ENCODE measurements at regions of chr7 and their contacts with region 1.

Region 1: GRCh38 chr7:143901668-143902331 is at the start of gene TCAF1:
- DNase-seq: peak; percentile 93
- ATAC-seq: peak; percentile 95
- H3K4me3 ChIP-seq: peak within 1 kb of the TSS; percentile 91
- H3K27ac ChIP-seq: peak within 1 kb of the TSS; percentile 96
- H3K4me1 ChIP-seq: peaks cover 15% of the 10 kb centered on the region
- H3K27me3 ChIP-seq: no peaks in the 10 kb centered on the region
- CTCF ChIP-seq: peak; percentile 47
- POLR2A ChIP-seq: peak; percentile 71
- RAD21 ChIP-seq: peak; percentile 41; the same call in 1 of the 2 replicates
- total RNA-seq, gene TCAF1: 86.4 and 91.8 TPM in 2 replicates

Region 2: DNA sequence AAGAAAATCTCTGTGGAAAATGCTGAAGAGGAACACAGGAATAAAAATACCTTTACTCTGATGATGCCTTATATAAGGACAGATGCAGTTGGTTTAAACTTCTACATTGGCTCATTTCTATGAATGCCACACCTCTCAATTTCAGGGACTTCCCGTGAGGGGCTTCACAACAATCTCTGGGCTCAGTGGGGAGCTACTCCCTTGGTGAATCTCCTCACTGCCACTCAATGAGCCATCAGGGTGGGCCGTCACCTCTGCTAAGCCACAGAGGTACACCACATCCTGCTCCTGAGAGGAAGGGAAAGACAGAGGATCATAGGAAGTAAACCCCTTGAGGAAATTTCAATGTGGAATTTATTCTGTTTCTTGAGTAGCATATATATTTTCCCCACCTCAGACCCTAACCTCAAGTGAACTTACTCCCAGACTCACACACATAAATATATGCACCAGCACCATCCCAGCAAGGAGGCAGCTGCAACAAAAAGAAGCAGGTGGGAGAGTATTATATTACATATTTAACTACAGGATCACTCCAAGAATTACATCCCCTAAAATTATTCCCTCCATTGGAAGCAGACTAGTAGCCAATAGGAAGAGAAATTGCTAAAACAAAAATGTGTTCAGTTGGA is 1215.8 kb before region 1 on chr7:
- CTCF ChIA-PET with region 1: no interaction called
- POLR2A ChIA-PET with region 1: no interaction called
- dilution Hi-C with region 1: no loop called
- in situ Hi-C with region 1: no loop called
- intact Hi-C with region 1: no loop called
- DNase-seq: no peak
- ATAC-seq: no peak
- H3K4me3 ChIP-seq: no peak overlapping the region
- H3K27ac ChIP-seq: no peak overlapping the region
- H3K4me1 ChIP-seq: no peaks in the 10 kb centered on the region
- H3K27me3 ChIP-seq: no peaks in the 10 kb centered on the region; the same call in 1 of the 2 replicates
- CTCF ChIP-seq: no peak
- POLR2A ChIP-seq: no peak
- RAD21 ChIP-seq: no peak

Region 3: DNA sequence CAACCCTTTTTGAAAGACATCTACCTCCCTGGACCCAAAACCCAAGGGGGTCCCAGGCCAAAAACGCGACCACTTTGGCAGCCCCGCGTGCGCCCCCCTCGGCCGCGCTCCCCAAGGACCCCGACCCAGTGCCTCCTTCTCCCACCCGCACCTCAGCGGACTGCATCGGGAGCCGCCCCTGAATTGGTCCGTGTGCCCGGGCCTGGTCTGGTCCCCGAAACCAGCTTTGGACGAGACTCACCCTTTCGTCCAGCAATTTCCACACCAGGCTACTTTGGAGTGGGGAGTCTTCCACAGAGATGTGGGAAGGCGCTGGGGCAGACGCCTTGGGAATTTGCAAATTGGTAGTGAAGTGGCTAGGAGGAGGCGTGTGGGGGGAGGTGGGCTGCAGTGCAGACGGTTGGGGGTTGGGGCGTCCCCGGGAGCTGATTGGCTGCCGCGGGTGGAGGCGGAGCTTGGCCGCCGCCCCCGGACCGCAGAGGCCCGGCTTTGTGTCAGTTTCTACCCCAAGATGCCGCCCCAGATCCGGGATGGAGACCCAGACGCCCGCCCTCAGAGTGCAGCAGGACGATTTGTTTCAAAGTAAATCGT is 16.7 kb before region 1 on chr7:
- CTCF ChIA-PET with region 1: interaction called, 5 read pairs
- POLR2A ChIA-PET with region 1: interaction called, 6 read pairs
- dilution Hi-C with region 1: no loop called
- in situ Hi-C with region 1: no loop called
- intact Hi-C with region 1: loop called (anchors 1 kb)
- DNase-seq: peak; percentile 72
- ATAC-seq: peak; percentile 86
- H3K4me3 ChIP-seq: peak overlapping the region; percentile 98
- H3K27ac ChIP-seq: peak overlapping the region; percentile 76
- H3K4me1 ChIP-seq: peaks cover 9% of the 10 kb centered on the region
- H3K27me3 ChIP-seq: no peaks in the 10 kb centered on the region
- CTCF ChIP-seq: no peak
- POLR2A ChIP-seq: no peak
- RAD21 ChIP-seq: no peak

Region 4: GRCh38 chr7:143936087-143937009 is 34.5 kb after region 1 on chr7:
- CTCF ChIA-PET with region 1: interaction called, 3 read pairs
- POLR2A ChIA-PET with region 1: interaction called, 3 read pairs
- dilution Hi-C with region 1: no loop called
- in situ Hi-C with region 1: no loop called
- intact Hi-C with region 1: loop called (anchors 5 kb)
- DNase-seq: peak; percentile 85
- ATAC-seq: peak; percentile 67
- H3K4me3 ChIP-seq: no peak overlapping the region
- H3K27ac ChIP-seq: peak overlapping the region; percentile 85
- H3K4me1 ChIP-seq: peaks cover 21% of the 10 kb centered on the region
- H3K27me3 ChIP-seq: no peaks in the 10 kb centered on the region
- CTCF ChIP-seq: no peak
- POLR2A ChIP-seq: no peak
- RAD21 ChIP-seq: no peak

Region 5: DNA sequence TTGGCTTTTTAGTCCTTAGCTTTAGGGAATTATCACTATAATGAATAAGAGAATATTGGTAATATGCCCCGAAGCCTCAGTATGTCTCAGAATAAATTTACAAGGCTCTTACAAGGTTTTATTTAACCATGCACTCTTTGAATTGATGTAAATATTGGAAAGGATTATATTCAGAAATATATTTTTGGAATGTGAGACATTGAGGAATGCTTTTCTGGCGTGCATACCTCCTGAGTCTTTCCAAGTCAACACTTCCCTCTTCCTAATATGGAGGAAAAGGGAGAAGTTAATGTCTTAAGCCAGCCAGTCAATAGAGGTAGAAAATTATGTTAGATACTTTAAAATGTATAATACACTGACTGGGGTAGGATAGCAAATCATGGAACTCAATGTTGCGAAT is 51.6 kb after region 1 on chr7:
- CTCF ChIA-PET with region 1: no interaction called
- POLR2A ChIA-PET with region 1: interaction called, 11 read pairs
- dilution Hi-C with region 1: no loop called
- in situ Hi-C with region 1: no loop called
- intact Hi-C with region 1: no loop called
- DNase-seq: no peak
- ATAC-seq: peak; percentile 38; the same call in 1 of the 2 replicates
- H3K4me3 ChIP-seq: no peak overlapping the region
- H3K27ac ChIP-seq: no peak overlapping the region
- H3K4me1 ChIP-seq: peaks cover 2% of the 10 kb centered on the region
- H3K27me3 ChIP-seq: peaks cover 3% of the 10 kb centered on the region; the same call in 1 of the 2 replicates
- CTCF ChIP-seq: no peak
- POLR2A ChIP-seq: no peak
- RAD21 ChIP-seq: no peak

Region 6: DNA sequence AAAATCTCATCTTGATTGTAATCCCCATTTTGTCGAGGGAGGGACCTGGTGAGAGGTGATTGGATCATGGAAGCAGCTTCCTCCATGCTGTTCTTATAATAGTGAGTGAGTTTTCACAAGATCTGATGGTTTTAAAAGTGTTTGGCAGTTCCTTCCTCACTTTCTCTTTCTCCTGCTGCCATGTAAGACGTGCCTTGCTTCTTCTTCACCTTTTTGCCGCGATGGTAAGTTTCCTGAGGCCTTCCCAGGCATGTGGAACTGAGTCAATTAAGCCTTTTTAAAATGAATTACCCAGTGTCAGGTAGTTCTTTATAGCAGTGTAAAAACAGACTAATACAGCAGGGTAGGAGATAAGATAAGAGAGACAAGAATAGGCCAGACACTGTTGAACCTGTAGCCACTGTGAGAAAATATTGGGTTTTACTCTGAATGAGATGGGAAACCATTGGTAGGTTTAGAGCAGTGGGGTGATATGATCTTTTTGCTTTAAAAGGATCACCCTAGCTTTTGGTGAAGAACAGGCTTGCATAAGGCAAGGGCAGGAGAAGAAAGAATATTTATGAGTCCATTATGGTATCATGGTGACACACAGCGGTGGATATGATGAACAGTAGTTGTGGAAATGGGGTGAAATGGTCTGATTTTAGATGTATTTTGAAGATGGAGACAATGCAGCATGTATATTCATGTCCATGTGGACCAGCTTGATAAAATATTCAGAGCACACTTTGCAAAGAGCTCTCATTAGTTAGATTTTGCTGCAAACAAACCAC is 109.8 kb after region 1 on chr7:
- CTCF ChIA-PET with region 1: interaction called, 15 read pairs
- POLR2A ChIA-PET with region 1: no interaction called
- dilution Hi-C with region 1: no loop called
- in situ Hi-C with region 1: no loop called
- intact Hi-C with region 1: loop called (anchors 1 kb)
- DNase-seq: peak; percentile 51
- ATAC-seq: peak; percentile 90
- H3K4me3 ChIP-seq: no peak overlapping the region
- H3K27ac ChIP-seq: no peak overlapping the region
- H3K4me1 ChIP-seq: no peaks in the 10 kb centered on the region
- H3K27me3 ChIP-seq: no peaks in the 10 kb centered on the region
- CTCF ChIP-seq: peak; percentile 68
- POLR2A ChIP-seq: no peak
- RAD21 ChIP-seq: peak; percentile 73

Region 7: DNA sequence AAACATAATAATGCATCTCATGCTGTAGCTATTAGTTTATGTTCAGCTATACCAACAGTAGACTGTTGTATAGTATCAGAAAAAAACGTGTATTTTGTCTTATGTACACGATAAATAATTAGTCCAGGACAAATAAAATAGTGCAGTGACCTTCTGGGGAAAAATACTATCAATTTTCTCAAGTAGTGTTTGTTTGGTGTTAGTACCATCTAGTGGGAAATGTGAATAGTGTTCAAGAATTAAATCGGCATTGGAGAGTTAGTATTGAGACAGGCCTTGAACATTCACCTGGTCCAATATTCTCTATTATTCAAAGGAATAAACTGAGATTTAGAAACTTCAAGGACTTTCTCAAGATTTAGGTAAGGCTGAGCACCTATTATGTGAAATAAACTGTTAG is 125.3 kb after region 1 on chr7:
- CTCF ChIA-PET with region 1: no interaction called
- POLR2A ChIA-PET with region 1: no interaction called
- dilution Hi-C with region 1: no loop called
- in situ Hi-C with region 1: no loop called
- intact Hi-C with region 1: loop called (anchors 1 kb)
- DNase-seq: peak; percentile 50
- ATAC-seq: peak; percentile 84
- H3K4me3 ChIP-seq: no peak overlapping the region
- H3K27ac ChIP-seq: no peak overlapping the region
- H3K4me1 ChIP-seq: no peaks in the 10 kb centered on the region
- H3K27me3 ChIP-seq: peaks cover 2% of the 10 kb centered on the region
- CTCF ChIP-seq: peak; percentile 70
- POLR2A ChIP-seq: no peak
- RAD21 ChIP-seq: peak; percentile 77